Activated CD8-positive, alpha-beta T cell treated with anti-CD3 and anti-CD28 coated beads for 36 hours (primary cell): ENCODE measurements at regions of chr13 and their contacts with region 1.

Region 1: DNA sequence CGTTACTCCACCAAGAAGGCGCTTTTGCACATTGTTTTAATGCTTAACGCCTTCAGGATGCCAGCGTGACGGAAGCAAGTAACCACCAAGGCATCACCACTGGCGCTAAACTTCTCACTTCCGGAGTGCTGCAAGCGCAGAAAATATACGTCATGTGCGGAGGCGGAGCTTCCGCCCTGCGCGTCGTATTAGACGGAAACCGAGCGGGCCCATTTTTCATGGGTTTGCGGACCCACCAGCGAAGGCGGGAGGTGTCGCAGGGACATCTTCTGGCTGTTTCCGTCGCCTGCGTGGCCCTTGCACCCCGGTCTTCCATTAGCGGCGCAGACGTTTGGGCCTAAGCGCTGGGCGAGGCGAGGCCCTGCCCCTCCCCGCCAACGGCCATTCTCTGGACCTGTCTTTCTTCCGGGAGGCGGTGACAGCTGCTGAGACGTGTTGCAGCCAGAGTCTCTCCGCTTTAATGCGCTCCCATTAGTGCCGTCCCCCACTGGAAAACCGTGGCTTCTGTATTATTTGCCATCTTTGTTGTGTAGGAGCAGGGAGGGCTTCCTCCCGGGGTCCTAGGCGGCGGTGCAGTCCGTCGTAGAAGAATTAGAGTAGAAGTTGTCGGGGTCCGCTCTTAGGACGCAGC is at the start of gene ERCC5:
- DNase-seq: peak; percentile 97
- ATAC-seq: peak; percentile 86
- H3K4me3 Mint-ChIP-seq: peak within 1 kb of the TSS; percentile 92
- H3K27ac Mint-ChIP-seq: peak within 1 kb of the TSS; percentile 94
- H3K4me1 Mint-ChIP-seq: peaks cover 31% of the 10 kb centered on the region
- H3K27me3 Mint-ChIP-seq: no peaks in the 10 kb centered on the region
- CTCF ChIP-seq: no peak
- total RNA-seq, gene ERCC5: 59.4 to 66.5 TPM

Region 2: DNA sequence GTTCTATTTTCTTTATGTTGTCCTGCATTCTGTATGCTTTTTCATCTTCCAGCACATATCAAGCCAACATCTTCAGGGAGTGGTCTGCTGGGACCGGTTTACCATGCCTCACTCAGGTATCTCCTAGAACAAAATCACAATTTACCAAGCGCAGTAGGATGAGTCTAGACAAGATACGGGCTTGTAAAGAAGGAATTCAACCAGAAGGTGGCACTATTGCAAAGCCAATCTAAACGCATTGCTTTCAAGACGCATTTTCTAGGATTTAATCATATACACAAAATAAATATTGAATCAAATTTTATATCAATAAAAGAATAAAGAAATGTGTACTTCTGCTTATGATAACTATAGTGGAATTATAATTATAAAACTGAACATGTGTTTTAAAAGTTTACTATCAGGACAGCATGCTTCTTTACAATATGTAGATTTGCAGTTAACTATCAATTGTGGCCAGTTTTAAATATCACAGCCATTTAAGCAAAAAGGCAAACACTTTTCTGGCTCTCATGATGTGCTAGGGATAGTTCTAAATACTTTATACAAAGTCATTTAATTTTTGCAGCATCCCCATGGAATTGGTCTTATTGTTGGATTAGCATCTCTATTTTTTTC is 265.1 kb before region 1 on chr13:
- CTCF ChIA-PET with region 1: interaction called, 23 read pairs
- POLR2A ChIA-PET with region 1: interaction called, 5 read pairs
- intact Hi-C with region 1: loop called (anchors 1 kb)
- DNase-seq: peak; percentile 42
- ATAC-seq: peak; percentile 82
- H3K4me3 Mint-ChIP-seq: no peak overlapping the region
- H3K27ac Mint-ChIP-seq: no peak overlapping the region
- H3K4me1 Mint-ChIP-seq: peaks cover 12% of the 10 kb centered on the region
- H3K27me3 Mint-ChIP-seq: peaks cover 2% of the 10 kb centered on the region
- CTCF ChIP-seq: peak; percentile 86

Region 3: GRCh38 chr13:102773441-102774215 is 72.1 kb before region 1 on chr13 and contains the start of gene TEX30:
- CTCF ChIA-PET with region 1: interaction called, 4 read pairs
- POLR2A ChIA-PET with region 1: interaction called, 23 read pairs
- intact Hi-C with region 1: loop called (anchors 5 kb)
- DNase-seq: peak; percentile 84
- ATAC-seq: peak; percentile 97
- H3K4me3 Mint-ChIP-seq: peak within 1 kb of the TSS; percentile 88
- H3K27ac Mint-ChIP-seq: peak within 1 kb of the TSS; percentile 95
- H3K4me1 Mint-ChIP-seq: peaks cover 47% of the 10 kb centered on the region
- H3K27me3 Mint-ChIP-seq: no peaks in the 10 kb centered on the region
- CTCF ChIP-seq: no peak
- total RNA-seq, gene TEX30: 30.5 to 32.8 TPM

Region 4: GRCh38 chr13:102800145-102801041 is 45.4 kb before region 1 on chr13:
- CTCF ChIA-PET with region 1: interaction called, 14 read pairs
- POLR2A ChIA-PET with region 1: interaction called, 20 read pairs
- intact Hi-C with region 1: loop called (anchors 5 kb)
- DNase-seq: peak; percentile 90
- ATAC-seq: peak; percentile 81
- H3K4me3 Mint-ChIP-seq: peak overlapping the region; percentile 92
- H3K27ac Mint-ChIP-seq: peak overlapping the region; percentile 81
- H3K4me1 Mint-ChIP-seq: peaks cover 23% of the 10 kb centered on the region
- H3K27me3 Mint-ChIP-seq: peaks cover 8% of the 10 kb centered on the region
- CTCF ChIP-seq: peak; percentile 83

Region 5: GRCh38 chr13:102870677-102871415 is 25.1 kb after region 1 on chr13:
- CTCF ChIA-PET with region 1: interaction called, 13 read pairs
- POLR2A ChIA-PET with region 1: interaction called, 3 read pairs
- intact Hi-C with region 1: no loop called
- DNase-seq: peak; percentile 67
- ATAC-seq: peak; percentile 76
- H3K4me3 Mint-ChIP-seq: no peak overlapping the region
- H3K27ac Mint-ChIP-seq: no peak overlapping the region
- H3K4me1 Mint-ChIP-seq: peaks cover 35% of the 10 kb centered on the region
- H3K27me3 Mint-ChIP-seq: no peaks in the 10 kb centered on the region
- CTCF ChIP-seq: peak; percentile 91